Testis (tissue), 5 donors: ENCODE measurements at regions of chr5 and their contacts with region 1.

Region 1: DNA sequence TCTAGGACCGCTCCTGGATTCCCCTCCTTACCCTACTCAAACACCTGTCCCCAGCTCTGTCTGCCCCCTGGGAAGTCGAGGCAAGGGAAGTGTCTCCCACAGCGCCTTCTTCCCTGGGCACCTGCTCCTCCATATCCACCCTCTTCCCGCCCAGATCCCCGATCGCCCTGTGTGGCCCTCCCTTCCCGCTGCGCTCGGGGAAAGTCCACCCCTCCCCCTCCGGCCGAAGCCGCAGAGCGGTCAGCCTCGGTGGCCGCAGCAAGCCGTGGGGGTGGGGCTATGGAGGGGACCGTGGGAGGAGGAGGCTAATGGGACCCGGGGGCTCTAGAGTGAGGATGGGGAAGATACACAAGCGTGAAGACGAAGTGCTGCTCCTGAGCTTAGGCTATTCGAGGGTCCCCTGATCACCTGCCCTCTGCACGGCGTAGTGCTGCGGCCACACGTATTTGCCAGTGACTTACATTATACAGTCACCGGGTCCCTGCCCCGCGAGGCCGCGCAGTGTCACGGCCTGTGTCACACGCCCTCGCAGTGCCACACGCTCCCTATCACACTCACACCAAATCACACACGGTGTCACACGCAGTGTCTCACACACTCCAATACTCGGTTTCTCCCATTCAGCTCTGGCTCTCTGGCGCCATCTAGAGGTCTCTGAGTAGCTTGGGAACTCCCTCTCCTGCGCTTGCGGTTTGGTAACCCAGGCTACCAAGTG is 658 bp upstream of the PCDH1 start:
- DNase-seq: peak; percentile 91
- H3K4me3 ChIP-seq: peak overlapping the region; percentile 57 to 63
- H3K27ac ChIP-seq: no peak overlapping the region
- H3K4me1 ChIP-seq: peaks cover 43% of the 10 kb centered on the region
- H3K27me3 ChIP-seq: no peaks in the 10 kb centered on the region
- CTCF ChIP-seq: peak; percentile 74 to 86 (median 76)
- POLR2A ChIP-seq: no peak

Region 2: DNA sequence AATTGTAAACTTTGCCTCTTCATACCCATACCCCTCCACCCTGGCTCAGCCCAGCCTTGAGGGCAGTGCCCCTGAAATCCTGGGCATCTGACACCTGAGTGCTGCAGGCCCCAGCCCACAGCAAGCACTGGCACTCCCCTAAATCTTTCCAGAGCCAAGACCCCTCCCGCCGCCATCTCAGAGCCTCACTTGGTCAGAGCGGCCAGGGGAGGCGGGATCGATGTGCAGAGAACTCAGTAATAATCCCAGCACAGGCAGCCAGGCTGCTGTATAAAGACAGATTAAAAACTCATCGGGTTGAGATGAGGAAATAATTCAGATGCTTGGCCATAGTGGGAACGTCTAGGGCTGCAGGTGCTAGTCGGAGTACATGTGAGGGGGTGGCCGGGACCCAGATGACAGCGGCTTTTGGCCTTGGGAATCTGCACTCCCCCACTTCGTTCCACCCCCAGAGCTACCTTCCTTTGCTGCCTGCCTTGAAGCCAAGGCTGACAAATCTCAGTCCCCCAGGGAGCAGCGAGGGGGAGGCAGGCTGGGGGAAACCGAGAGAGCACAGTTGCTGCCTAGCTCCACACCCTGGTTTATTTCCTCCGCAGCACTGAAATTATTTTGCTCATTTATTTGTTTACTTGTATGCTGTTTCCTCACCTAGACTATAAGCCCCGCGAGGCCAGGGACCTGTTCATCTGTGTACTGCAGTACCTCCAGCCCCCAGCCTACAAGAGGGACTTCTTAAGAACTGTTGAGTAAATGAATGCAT is 177.3 kb before region 1 on chr5:
- intact Hi-C with region 1: loop called (anchors 5 kb)
- DNase-seq: no peak
- H3K4me3 ChIP-seq: peak overlapping the region in 1 of 2 donors; percentile 62
- H3K27ac ChIP-seq: no peak overlapping the region
- H3K4me1 ChIP-seq: peaks cover 16% of the 10 kb centered on the region
- H3K27me3 ChIP-seq: no peaks in the 10 kb centered on the region
- CTCF ChIP-seq: no peak
- POLR2A ChIP-seq: no peak

Region 3: GRCh38 chr5:141951332-141951781 is 72.5 kb after region 1 on chr5:
- intact Hi-C with region 1: loop called (anchors 10 kb)
- DNase-seq: no peak
- H3K4me3 ChIP-seq: no peak overlapping the region
- H3K27ac ChIP-seq: no peak overlapping the region
- H3K4me1 ChIP-seq: no peaks in the 10 kb centered on the region
- H3K27me3 ChIP-seq: no peaks in the 10 kb centered on the region
- CTCF ChIP-seq: peak in 1 of 3 experiments; percentile 15
- POLR2A ChIP-seq: no peak

Region 4: GRCh38 chr5:142012792-142013388 is 134.0 kb after region 1 on chr5 and contains the start of gene GNPDA1:
- intact Hi-C with region 1: no loop called
- DNase-seq: peak; percentile 87
- H3K4me3 ChIP-seq: peak within 1 kb of the TSS; percentile 66 to 77
- H3K27ac ChIP-seq: peak within 1 kb of the TSS; percentile 93 to 96
- H3K4me1 ChIP-seq: peaks cover 19% of the 10 kb centered on the region
- H3K27me3 ChIP-seq: no peaks in the 10 kb centered on the region
- CTCF ChIP-seq: peak in 1 of 3 experiments; percentile 44
- POLR2A ChIP-seq: no peak
- total RNA-seq, gene GNPDA1: 32.9 to 49.4 TPM